ENCODE measurements at regions of chr1 and their contacts with region 1.

Region 1: GRCh38 chr1:107056426-107057196 is at the start of gene PRMT6:
- DNase-seq: peak; percentile 88
- H3K4me3 ChIP-seq: peak within 1 kb of the TSS; percentile 94 to 99
- H3K27ac ChIP-seq: peak within 1 kb of the TSS; percentile 51 to 96
- H3K4me1 ChIP-seq: peaks cover 0 to 12% of the 10 kb centered on the region in 2 experiments; a peak in 3 of 4 replicates
- H3K27me3 ChIP-seq: no peaks in the 10 kb centered on the region
- CTCF ChIP-seq: no peak; the same call in 1 of the 2 replicates
- EP300 ChIP-seq: no peak
- RAD21 ChIP-seq: no peak
- polyA plus RNA-seq, gene PRMT6: 15.2 and 17.2 TPM in 2 replicates

Region 2: DNA sequence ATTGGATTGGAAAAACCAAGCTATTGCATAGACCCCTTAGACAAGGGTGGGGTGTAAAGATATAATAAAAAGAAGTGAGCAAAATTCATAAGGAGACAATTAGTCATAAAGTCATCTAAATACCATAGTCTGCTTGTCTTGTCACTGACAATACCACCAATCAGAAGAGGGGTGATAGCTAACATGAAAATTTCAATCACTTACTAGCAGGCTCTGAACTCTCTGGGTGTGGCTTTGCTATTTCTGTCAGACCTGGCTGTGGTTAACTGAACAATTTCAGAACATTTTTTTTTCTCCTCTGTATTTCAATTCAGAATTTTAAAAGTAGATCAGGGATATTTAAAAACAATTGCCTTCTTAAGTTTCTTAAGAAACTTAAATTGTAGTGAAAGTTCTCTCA is 158.6 kb before region 1 on chr1:
- CTCF ChIA-PET with region 1: no interaction called
- POLR2A ChIA-PET with region 1: no interaction called
- DNase-seq: no peak
- H3K4me3 ChIP-seq: no peak overlapping the region
- H3K27ac ChIP-seq: no peak overlapping the region
- H3K4me1 ChIP-seq: no peaks in the 10 kb centered on the region
- H3K27me3 ChIP-seq: no peaks in the 10 kb centered on the region
- CTCF ChIP-seq: no peak
- EP300 ChIP-seq: no peak
- RAD21 ChIP-seq: no peak

Region 3: GRCh38 chr1:106944722-106945121 is 111.9 kb before region 1 on chr1:
- CTCF ChIA-PET with region 1: no interaction called
- POLR2A ChIA-PET with region 1: interaction called, 11 read pairs
- DNase-seq: no peak
- H3K4me3 ChIP-seq: no peak overlapping the region
- H3K27ac ChIP-seq: no peak overlapping the region
- H3K4me1 ChIP-seq: peaks cover 0 to 6% of the 10 kb centered on the region in 2 experiments; a peak in 2 of 4 replicates
- H3K27me3 ChIP-seq: no peaks in the 10 kb centered on the region
- CTCF ChIP-seq: no peak
- EP300 ChIP-seq: no peak
- RAD21 ChIP-seq: no peak

Measured in SK-N-SH (cell line).